ENCODE measurements at regions of chr6 and their contacts with region 1.

Region 1: DNA sequence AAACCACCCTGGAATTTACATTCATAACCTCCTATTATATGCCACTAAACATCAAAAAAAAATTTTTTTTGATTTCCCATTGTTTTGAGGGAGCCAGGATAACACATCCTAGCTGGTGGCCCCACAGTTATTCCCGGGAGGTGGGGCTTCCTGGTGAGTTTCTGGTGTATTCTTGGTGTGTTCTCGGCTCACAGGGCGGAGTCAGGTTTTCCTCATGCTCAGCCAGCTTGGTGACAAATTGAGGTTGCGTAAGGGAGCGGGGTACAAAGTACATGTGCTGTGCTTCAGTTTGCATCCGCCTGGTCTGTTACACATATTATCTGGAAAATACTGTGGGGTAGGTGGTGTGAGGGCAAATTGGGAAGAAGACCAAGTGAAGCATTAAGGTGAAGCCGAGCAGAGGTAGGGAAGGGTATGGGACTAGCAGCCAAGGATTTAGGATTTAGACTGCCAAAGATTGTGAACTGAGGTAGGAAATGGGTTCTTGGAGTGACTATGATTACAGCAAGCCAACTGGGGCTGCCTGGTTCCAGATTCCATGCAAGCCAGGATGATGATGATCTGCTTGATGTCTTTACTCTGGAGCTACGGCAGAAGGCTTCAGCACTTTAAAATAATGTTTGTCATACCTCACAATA is 46.2 kb upstream of the EEF1A1 start:
- DNase-seq: no peak
- H3K4me3 ChIP-seq: no peak overlapping the region
- H3K27ac ChIP-seq: no peak overlapping the region
- H3K4me1 ChIP-seq: peaks cover 3 to 14% (median 10%) of the 10 kb centered on the region in 4 experiments; a peak in 5 of 7 replicates
- H3K27me3 ChIP-seq: no peaks in the 10 kb centered on the region
- CTCF ChIP-seq: no peak
- EP300 ChIP-seq: no peak
- POLR2A ChIP-seq: no peak
- RAD21 ChIP-seq: no peak

Region 2: DNA sequence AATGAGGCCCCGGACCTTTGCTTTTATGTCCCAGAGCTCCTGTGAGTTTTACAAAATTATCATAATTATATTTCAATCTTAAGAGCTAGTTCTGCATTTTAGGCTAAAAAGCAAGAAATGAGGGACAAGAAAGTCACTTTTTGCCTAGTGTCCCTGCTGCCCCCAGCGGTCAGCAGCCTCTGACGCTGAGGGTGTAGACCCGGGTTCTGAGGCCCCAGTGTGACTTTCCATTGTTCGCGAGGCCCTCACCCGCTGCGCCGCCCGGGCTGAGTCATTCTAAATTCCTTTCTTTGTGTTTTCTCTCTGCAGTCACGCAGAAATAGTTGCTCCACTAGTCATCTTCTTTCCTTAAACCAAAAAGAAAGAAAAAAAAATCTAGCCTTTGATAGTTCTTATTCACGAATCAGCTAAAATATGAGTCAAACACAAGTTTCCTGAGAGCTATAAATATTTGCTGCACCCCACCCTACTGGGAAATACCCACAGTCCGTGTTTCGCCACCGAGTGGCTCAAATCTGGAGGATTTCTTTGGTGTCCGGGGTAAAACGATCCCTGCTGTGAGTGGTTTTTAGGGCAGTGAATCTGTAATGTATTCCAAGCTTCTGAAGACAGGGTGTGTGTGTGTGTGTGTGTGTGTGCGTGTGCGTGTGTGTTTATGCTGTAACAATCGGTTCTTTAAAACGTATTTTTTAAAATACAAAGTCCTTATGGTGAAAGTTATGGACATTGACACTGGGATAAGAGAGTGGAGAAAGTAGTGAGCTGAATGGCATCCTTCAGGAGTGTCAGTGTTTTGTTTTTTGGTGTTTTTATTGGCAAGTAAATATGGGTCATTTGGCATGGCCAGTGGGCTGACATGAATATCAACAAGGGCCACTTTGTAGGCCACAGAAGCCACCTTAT is 13.4 kb after region 1 on chr6:
- CTCF ChIA-PET with region 1: interaction called, 4 read pairs
- POLR2A ChIA-PET with region 1: interaction called, 82 read pairs
- DNase-seq: peak; percentile 94
- H3K4me3 ChIP-seq: peak overlapping the region; percentile 7 to 48 (median 36); a peak in 4 of 8 replicates
- H3K27ac ChIP-seq: peak overlapping the region; percentile 97
- H3K4me1 ChIP-seq: peaks cover 21 to 36% (median 24%) of the 10 kb centered on the region in 4 experiments
- H3K27me3 ChIP-seq: no peaks in the 10 kb centered on the region
- CTCF ChIP-seq: peak; percentile 29 to 74 (median 69)
- EP300 ChIP-seq: peak; percentile 25 to 93; a peak in 2 of 3 replicates
- POLR2A ChIP-seq: 0 out of 3 replicates have a peak, but pooled peaks of 1 of the 2 experiments have one; percentile 15
- RAD21 ChIP-seq: peak in 1 of 2 experiments; percentile 45; a peak in 3 of 4 replicates

Region 3: DNA sequence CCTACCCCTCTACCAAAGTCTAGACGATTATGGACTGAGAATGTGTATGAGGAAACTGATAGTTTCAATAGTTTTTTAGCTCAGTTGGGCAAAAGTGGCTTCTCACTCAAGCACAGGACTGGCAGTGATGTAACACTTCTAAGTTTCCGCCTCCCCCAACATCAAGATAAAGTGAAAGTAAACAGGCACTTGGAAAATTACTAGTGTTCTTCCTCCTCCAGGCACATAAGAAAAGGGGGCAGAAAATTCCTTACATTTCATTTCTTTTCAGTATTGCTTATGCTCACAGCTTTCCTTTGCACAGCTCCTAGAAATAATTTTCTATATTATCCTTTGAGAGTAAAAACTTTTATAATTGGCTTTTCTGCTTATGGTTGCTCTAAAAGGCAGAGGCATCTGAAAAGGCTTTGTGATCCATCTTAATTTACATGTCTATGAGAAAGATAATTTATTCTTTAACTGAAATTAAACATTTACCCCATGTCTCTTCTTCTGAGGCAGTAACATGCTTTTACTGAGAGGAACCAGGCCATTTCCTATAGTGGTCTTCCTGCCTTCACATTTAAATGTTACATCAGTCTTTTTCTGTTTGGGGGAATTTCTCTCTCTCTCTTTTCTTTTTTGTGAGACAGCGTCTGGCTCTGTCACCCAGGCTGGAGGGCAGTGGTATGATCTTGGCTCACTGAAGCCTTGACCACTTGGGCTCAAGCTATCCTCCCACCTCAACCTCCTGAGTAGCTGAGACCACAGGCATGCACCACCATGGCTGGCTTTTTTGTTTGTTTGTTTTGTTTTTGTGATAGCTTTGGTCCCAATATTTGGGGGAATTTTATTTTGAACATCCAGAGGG is 18.7 kb after region 1 on chr6:
- CTCF ChIA-PET with region 1: interaction called, 5 read pairs
- POLR2A ChIA-PET with region 1: interaction called, 82 read pairs
- DNase-seq: no peak
- H3K4me3 ChIP-seq: peak overlapping the region in 1 of 4 experiments; percentile 33; a peak in 1 of 8 replicates
- H3K27ac ChIP-seq: peak overlapping the region; percentile 67
- H3K4me1 ChIP-seq: peaks cover 5 to 9% (median 7%) of the 10 kb centered on the region in 4 experiments; a peak in 5 of 7 replicates
- H3K27me3 ChIP-seq: no peaks in the 10 kb centered on the region
- CTCF ChIP-seq: no peak
- EP300 ChIP-seq: no peak
- POLR2A ChIP-seq: no peak
- RAD21 ChIP-seq: no peak

Region 4: GRCh38 chr6:73728548-73729205 is 161.6 kb after region 1 on chr6:
- CTCF ChIA-PET with region 1: no interaction called
- POLR2A ChIA-PET with region 1: no interaction called
- DNase-seq: no peak
- H3K4me3 ChIP-seq: no peak overlapping the region
- H3K27ac ChIP-seq: no peak overlapping the region
- H3K4me1 ChIP-seq: no peaks in the 10 kb centered on the region
- H3K27me3 ChIP-seq: no peaks in the 10 kb centered on the region
- CTCF ChIP-seq: no peak
- EP300 ChIP-seq: no peak
- POLR2A ChIP-seq: no peak
- RAD21 ChIP-seq: no peak

Measured in H1 (cell line).